Activated CD8-positive, alpha-beta T cell treated with anti-CD3 and anti-CD28 coated beads for 36 hours (primary cell): ENCODE measurements at regions of chr1 and their contacts with region 1.

Region 1: DNA sequence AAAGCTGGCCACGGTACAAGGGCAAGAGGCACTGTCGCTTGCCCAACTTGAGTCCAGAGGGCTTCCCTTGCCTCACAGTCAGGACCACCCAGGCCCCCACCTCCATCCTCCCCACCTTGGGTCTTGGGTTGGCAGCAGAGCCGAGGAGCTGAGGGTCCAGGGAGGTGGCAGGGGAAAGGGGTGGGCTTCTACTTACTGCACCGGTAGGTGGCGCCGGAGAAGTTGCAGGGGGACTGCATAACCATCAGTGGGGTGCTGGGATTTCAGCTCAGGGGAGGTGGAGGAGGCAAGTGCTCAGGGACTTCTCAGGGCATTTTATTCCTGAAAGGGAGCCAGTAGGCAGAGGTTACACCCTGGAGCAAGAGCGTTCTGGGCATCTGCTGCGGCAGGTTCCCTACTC is 44.0 kb downstream of the TRIM62 start:
- DNase-seq: peak; percentile 70
- ATAC-seq: peak; percentile 73
- H3K4me3 Mint-ChIP-seq: no peak overlapping the region
- H3K27ac Mint-ChIP-seq: no peak overlapping the region
- H3K4me1 Mint-ChIP-seq: peaks cover 8% of the 10 kb centered on the region
- H3K27me3 Mint-ChIP-seq: no peaks in the 10 kb centered on the region
- CTCF ChIP-seq: peak; percentile 62

Region 2: GRCh38 chr1:32627596-32628162 is 510.1 kb before region 1 on chr1:
- CTCF ChIA-PET with region 1: no interaction called
- POLR2A ChIA-PET with region 1: no interaction called
- intact Hi-C with region 1: no loop called
- DNase-seq: peak; percentile 49
- ATAC-seq: peak; percentile 56
- H3K4me3 Mint-ChIP-seq: peak overlapping the region; percentile 34
- H3K27ac Mint-ChIP-seq: peak overlapping the region; percentile 83
- H3K4me1 Mint-ChIP-seq: peaks cover 32% of the 10 kb centered on the region
- H3K27me3 Mint-ChIP-seq: no peaks in the 10 kb centered on the region
- CTCF ChIP-seq: no peak

Region 3: GRCh38 chr1:33367485-33368405 is 229.9 kb after region 1 on chr1:
- CTCF ChIA-PET with region 1: no interaction called
- POLR2A ChIA-PET with region 1: no interaction called
- intact Hi-C with region 1: loop called (anchors 10 kb)
- DNase-seq: peak; percentile 88
- ATAC-seq: peak; percentile 98
- H3K4me3 Mint-ChIP-seq: no peak overlapping the region
- H3K27ac Mint-ChIP-seq: no peak overlapping the region
- H3K4me1 Mint-ChIP-seq: peaks cover 2% of the 10 kb centered on the region
- H3K27me3 Mint-ChIP-seq: no peaks in the 10 kb centered on the region
- CTCF ChIP-seq: peak; percentile 96